CD8-positive, alpha-beta memory T cell (primary cell): ENCODE measurements at regions of chr9 and their contacts with region 1.

Region 1: DNA sequence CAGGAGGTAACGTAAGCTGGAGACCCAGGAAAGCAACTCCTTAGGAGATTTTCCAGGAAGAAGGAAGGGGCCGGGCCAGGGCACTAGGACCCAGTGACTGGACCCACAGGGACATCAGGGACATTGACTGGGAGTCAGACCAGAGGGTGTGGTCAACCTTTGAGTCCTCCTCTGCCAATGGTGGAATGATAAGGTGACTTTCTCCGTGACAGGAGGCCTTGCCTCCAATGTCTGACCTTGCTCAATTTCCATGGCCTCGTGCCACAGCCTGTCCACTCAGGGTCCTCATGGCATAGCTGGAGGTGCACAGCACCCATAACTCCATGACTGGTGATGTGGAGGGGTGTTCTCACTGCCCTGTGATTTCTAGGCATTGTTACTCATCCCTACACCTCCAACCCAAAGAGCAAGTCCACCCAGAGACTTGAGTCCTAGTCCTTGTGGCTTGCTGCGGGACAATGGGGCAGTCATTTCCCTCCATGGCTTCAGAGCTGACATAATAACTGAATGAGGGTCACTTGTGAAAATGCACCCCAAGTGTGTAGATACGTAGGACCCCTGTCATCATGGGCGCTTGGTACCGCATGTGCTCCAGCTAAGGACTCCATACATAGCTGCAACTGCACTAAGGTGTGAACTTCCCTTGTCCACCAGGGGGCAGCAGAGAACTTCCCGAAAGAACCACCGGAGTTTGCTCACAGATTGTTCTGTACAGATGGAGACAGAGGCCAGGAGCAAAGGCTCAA is 4.1 kb upstream of the AMBP start:
- DNase-seq: peak; percentile 47 to 80 (median 59)
- H3K4me3 ChIP-seq: no peak overlapping the region
- H3K4me3 Mint-ChIP-seq: no peak overlapping the region
- H3K27ac ChIP-seq: no peak overlapping the region
- H3K27ac Mint-ChIP-seq: peak overlapping the region in 1 of 8 donors; percentile 52
- H3K4me1 ChIP-seq: no peaks in the 10 kb centered on the region
- H3K4me1 Mint-ChIP-seq: peaks cover 0 to 2% (median 0%) of the 10 kb centered on the region in 3 donors
- H3K27me3 ChIP-seq: no peaks in the 10 kb centered on the region
- H3K27me3 Mint-ChIP-seq: peaks cover under 1 to 15% of the 10 kb centered on the region in 2 donors

Region 2: DNA sequence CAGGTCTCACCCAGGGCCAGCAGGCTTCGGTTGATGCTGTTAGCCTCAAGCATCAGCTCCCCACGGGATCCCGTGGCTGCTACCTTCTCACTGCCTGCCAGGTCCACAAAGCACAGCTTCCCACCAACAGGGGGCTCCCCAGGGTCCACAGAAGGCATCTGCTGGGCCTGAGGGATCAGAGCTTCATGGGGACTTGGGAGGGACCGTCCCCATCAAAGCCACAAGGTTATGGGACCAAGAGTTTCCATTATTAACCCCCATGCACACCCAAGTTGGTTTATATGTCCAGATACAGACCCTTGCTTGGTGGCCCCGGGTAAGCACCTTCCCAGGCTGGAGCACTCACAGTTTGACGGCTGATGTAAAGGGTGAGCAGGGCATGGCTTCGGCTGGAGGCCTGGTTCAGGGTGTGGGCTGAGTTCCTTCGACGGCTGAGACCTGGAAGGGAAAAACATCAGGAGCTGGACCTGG is 13.9 kb after region 1 on chr9:
- CTCF ChIA-PET with region 1: interaction called, 10 read pairs
- POLR2A ChIA-PET with region 1: no interaction called
- DNase-seq: no peak
- H3K4me3 ChIP-seq: no peak overlapping the region
- H3K4me3 Mint-ChIP-seq: peak overlapping the region in 2 of 7 donors; percentile 18 to 63
- H3K27ac ChIP-seq: no peak overlapping the region
- H3K27ac Mint-ChIP-seq: peak overlapping the region in 1 of 8 donors; percentile 48
- H3K4me1 ChIP-seq: no peaks in the 10 kb centered on the region
- H3K4me1 Mint-ChIP-seq: peaks cover 8 to 18% (median 14%) of the 10 kb centered on the region in 3 donors
- H3K27me3 ChIP-seq: peaks cover 13% of the 10 kb centered on the region
- H3K27me3 Mint-ChIP-seq: peaks cover 32 to 47% of the 10 kb centered on the region in 2 donors

Region 3: DNA sequence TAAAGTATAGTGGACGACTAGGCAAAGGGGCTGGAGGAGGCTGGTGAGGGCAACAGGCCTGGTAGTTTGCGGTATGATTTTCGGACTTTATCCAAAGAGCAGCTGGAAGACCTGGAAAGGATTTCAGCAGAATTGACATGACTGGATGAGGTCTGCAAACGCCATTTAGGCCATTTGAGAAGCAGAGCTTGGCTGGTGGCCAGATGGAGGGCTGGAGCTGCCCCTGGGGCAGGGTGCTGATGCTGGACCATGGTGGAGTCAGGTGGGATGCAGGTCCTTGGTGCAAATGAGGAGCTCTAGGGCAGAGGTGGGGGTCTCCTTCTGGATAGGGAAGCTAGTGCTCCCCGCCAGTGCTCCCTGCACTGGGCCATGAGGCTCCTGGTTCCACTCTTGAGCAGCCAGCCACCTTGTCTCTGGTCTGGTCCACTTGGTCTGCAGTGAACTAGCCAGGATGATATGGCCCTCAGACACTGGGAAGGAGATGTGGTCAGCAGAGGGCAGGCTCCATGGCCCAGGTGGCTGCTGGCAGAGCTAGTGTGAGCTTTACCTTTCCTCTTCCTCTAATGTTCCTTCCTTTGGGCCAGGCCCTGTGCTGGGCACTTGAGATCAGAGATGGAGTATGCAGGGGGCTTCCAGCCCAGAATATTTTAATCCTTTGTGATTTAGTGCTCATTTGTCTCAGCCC is 104.6 kb after region 1 on chr9:
- CTCF ChIA-PET with region 1: no interaction called
- POLR2A ChIA-PET with region 1: no interaction called
- DNase-seq: no peak
- H3K4me3 ChIP-seq: no peak overlapping the region
- H3K4me3 Mint-ChIP-seq: no peak overlapping the region
- H3K27ac ChIP-seq: no peak overlapping the region
- H3K27ac Mint-ChIP-seq: no peak overlapping the region
- H3K4me1 ChIP-seq: no peaks in the 10 kb centered on the region
- H3K4me1 Mint-ChIP-seq: no peaks in the 10 kb centered on the region
- H3K27me3 ChIP-seq: no peaks in the 10 kb centered on the region
- H3K27me3 Mint-ChIP-seq: peaks cover 1 to 11% of the 10 kb centered on the region in 2 donors

Region 4: DNA sequence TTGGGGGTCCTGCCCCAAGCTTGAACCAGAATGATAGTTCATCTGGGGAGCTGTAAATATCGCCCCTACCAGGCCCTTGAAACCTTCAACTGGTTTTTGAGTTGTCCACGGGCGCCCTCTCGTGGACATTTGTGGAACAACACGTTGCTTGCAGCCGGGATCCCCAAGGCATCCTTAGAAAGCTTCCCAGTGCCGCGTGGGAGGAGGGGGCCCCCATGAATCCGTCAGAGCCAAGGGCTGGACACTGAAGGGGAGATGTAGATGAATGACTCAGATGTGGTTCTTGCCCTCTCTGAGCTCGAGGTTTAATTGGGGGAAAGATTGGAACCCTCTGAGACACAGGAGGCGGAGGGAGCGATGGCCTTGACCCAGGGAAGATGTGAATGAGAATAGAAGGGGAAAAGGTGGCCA is 208.9 kb after region 1 on chr9:
- CTCF ChIA-PET with region 1: interaction called, 19 read pairs
- POLR2A ChIA-PET with region 1: no interaction called
- DNase-seq: peak; percentile 42 to 77 (median 58)
- H3K4me3 ChIP-seq: no peak overlapping the region
- H3K4me3 Mint-ChIP-seq: no peak overlapping the region
- H3K27ac ChIP-seq: no peak overlapping the region
- H3K27ac Mint-ChIP-seq: peak overlapping the region in 4 of 8 donors; percentile 1 to 86 (median 39)
- H3K4me1 ChIP-seq: no peaks in the 10 kb centered on the region
- H3K4me1 Mint-ChIP-seq: peaks cover 0 to 3% (median 0%) of the 10 kb centered on the region in 3 donors
- H3K27me3 ChIP-seq: peaks cover 4% of the 10 kb centered on the region
- H3K27me3 Mint-ChIP-seq: peaks cover 2 to 8% of the 10 kb centered on the region in 2 donors